ENCODE measurements at regions of chr20 and their contacts with region 1.

Region 1: GRCh38 chr20:17504898-17505635 is 26.1 kb downstream of the BFSP1 start:
- DNase-seq: no peak
- ATAC-seq: peak; percentile 63
- H3K4me3 Mint-ChIP-seq: peak overlapping the region; percentile 78
- H3K27ac Mint-ChIP-seq: peak overlapping the region; percentile 85
- H3K4me1 Mint-ChIP-seq: peaks cover 37% of the 10 kb centered on the region
- H3K27me3 Mint-ChIP-seq: peaks cover 3% of the 10 kb centered on the region
- CTCF ChIP-seq: peak; percentile 74

Region 2: DNA sequence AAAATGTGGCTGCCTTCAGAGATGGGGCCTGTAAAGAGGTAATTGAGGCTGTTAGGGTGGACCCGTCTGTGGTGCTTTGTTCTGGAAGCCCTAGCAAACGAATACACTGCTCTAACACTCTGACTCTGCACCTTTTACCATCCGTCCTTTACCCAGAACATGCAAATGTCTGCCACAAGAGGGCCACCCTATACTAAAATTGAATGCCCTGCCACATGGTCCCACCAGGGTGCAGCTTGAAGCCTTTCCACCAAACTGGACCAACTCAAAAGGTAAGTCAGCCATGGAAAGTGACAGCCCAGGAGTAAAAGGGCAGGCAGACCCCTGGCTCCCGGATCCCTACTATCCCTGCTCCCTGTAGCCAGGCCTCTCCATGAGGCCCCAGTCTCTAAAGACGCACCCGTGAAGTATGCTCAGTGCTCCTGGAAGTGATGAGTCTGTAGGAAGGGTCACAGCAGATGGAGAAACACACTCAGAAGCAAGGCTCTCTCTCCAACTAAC is 31.9 kb after region 1 on chr20:
- CTCF ChIA-PET with region 1: interaction called, 10 read pairs
- POLR2A ChIA-PET with region 1: no interaction called
- intact Hi-C with region 1: no loop called
- DNase-seq: peak; percentile 81
- ATAC-seq: peak; percentile 97
- H3K4me3 Mint-ChIP-seq: no peak overlapping the region
- H3K27ac Mint-ChIP-seq: no peak overlapping the region
- H3K4me1 Mint-ChIP-seq: peaks cover 15% of the 10 kb centered on the region
- H3K27me3 Mint-ChIP-seq: peaks cover 16% of the 10 kb centered on the region
- CTCF ChIP-seq: peak; percentile 86

Region 3: DNA sequence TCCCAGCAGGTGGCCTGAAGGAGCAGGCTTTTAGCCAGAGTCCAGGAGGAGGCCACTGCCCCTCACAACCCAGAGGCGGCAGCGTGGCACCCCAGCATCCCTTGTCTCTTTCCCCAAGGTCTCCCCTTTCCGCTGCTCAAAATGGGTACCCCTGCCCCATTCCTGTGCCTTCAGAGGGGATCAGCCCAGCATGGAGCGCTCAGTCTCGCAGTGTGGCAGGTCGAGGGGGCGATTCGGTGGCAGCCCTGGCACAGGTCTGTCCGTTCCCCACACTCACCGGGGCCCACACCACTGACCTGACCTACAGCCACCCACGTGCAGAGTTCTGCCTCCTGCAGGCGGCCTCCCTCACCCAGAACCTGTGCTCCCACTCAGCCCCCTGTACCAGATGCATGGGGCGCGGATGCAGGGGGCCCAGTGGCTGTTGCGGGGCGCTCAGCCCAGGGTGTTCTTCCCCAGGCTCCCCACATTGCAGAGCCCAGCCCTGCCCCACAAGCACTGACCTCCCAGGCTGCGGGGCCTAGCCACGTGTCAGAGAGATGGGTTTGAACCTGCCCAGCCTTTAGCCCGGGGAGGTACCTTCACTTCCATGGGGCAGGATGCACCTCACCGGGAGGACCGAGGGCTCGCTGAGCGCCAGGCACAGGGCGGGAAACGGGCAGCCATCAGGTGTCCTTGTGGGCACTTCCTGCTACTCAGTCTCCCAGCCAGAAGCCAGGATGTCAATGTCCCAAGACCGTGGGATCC is 106.6 kb after region 1 on chr20:
- CTCF ChIA-PET with region 1: interaction called, 32 read pairs
- POLR2A ChIA-PET with region 1: no interaction called
- intact Hi-C with region 1: loop called (anchors 5 kb)
- DNase-seq: peak; percentile 58
- ATAC-seq: peak; percentile 3
- H3K4me3 Mint-ChIP-seq: peak overlapping the region; percentile 44
- H3K27ac Mint-ChIP-seq: peak overlapping the region; percentile 90
- H3K4me1 Mint-ChIP-seq: peaks cover 36% of the 10 kb centered on the region
- H3K27me3 Mint-ChIP-seq: no peaks in the 10 kb centered on the region
- CTCF ChIP-seq: peak; percentile 73

Region 4: GRCh38 chr20:17898548-17898994 is 393.5 kb after region 1 on chr20:
- CTCF ChIA-PET with region 1: interaction called, 13 read pairs
- POLR2A ChIA-PET with region 1: no interaction called
- intact Hi-C with region 1: loop called (anchors 5 kb)
- DNase-seq: peak; percentile 81
- ATAC-seq: peak; percentile 67
- H3K4me3 Mint-ChIP-seq: no peak overlapping the region
- H3K27ac Mint-ChIP-seq: no peak overlapping the region
- H3K4me1 Mint-ChIP-seq: peaks cover 19% of the 10 kb centered on the region
- H3K27me3 Mint-ChIP-seq: peaks cover 21% of the 10 kb centered on the region
- CTCF ChIP-seq: peak; percentile 95

Region 5: GRCh38 chr20:17995967-17996819 is 491.1 kb after region 1 on chr20:
- CTCF ChIA-PET with region 1: interaction called, 4 read pairs
- POLR2A ChIA-PET with region 1: no interaction called
- intact Hi-C with region 1: loop called (anchors 10 kb)
- DNase-seq: peak; percentile 54
- ATAC-seq: peak; percentile 72
- H3K4me3 Mint-ChIP-seq: no peak overlapping the region
- H3K27ac Mint-ChIP-seq: no peak overlapping the region
- H3K4me1 Mint-ChIP-seq: peaks cover 27% of the 10 kb centered on the region
- H3K27me3 Mint-ChIP-seq: peaks cover 22% of the 10 kb centered on the region
- CTCF ChIP-seq: peak; percentile 94

Measured in activated CD8-positive, alpha-beta T cell treated with anti-CD3 and anti-CD28 coated beads for 36 hours (primary cell).